ENCODE measurements at regions of chr5 and their contacts with region 1.

Region 1: GRCh38 chr5:139690064-139690802 is 42.1 kb downstream of the CXXC5 start:
- DNase-seq: no peak
- ATAC-seq: peak; percentile 77
- H3K4me3 ChIP-seq: no peak overlapping the region
- H3K27ac ChIP-seq: no peak overlapping the region
- H3K4me1 ChIP-seq: peaks cover 12% of the 10 kb centered on the region
- H3K27me3 ChIP-seq: no peaks in the 10 kb centered on the region
- CTCF ChIP-seq: peak; percentile 61 to 83 (median 75); a peak in 5 of 6 replicates
- EP300 ChIP-seq: no peak
- POLR2A ChIP-seq: no peak
- RAD21 ChIP-seq: peak; percentile 90

Region 2: DNA sequence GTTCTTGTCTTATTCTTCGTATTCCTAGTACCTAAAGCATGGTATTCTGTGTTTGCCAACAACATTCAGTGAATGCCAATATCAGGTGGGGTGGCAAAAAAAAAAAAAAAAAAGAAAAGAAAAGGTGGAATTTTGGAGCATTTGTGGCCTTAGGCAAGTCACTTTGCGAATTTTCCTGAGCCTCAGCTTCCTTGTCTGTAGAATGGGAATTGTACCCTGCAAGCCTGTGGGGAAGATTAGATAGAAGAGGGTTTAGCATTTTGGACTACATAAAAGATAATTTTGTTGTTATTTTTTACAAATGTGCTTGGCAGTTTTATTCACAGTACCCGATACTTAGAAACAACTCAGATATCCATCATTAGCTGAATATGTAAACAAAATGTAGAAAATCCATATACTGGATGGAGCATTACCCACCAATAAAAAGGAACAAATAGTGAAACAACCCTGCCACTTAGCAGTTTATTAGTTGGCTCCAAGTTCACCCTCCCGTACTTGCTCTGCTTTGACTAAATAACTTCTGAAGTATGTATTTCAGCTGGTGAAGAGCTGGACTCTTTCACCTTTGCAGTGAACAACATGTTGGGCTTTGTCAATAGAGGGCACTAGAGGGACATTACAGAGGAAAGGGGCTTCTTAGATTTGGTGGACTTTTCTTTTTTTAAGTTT is 115.5 kb before region 1 on chr5:
- CTCF ChIA-PET with region 1: interaction called, 18 read pairs
- POLR2A ChIA-PET with region 1: interaction called, 6 read pairs
- RAD21 ChIA-PET with region 1: interaction called, 14 read pairs
- SMC1A ChIA-PET with region 1: interaction called, 7 read pairs
- in situ Hi-C with region 1: no loop called
- intact Hi-C with region 1: no loop called
- DNase-seq: no peak
- ATAC-seq: peak; percentile 78
- H3K4me3 ChIP-seq: no peak overlapping the region
- H3K27ac ChIP-seq: no peak overlapping the region
- H3K4me1 ChIP-seq: peaks cover 40% of the 10 kb centered on the region
- H3K27me3 ChIP-seq: no peaks in the 10 kb centered on the region
- CTCF ChIP-seq: peak; percentile 65 to 78 (median 70)
- EP300 ChIP-seq: no peak
- POLR2A ChIP-seq: no peak
- RAD21 ChIP-seq: peak; percentile 75

Region 3: GRCh38 chr5:139660923-139661814 is 29.1 kb before region 1 on chr5:
- CTCF ChIA-PET with region 1: interaction called, 11 read pairs
- POLR2A ChIA-PET with region 1: interaction called, 6 read pairs
- RAD21 ChIA-PET with region 1: interaction called, 8 read pairs
- SMC1A ChIA-PET with region 1: interaction called, 3 read pairs
- in situ Hi-C with region 1: no loop called
- intact Hi-C with region 1: no loop called
- DNase-seq: no peak
- ATAC-seq: peak; percentile 46
- H3K4me3 ChIP-seq: peak overlapping the region; percentile 14; the same call in 1 of the 2 replicates
- H3K27ac ChIP-seq: peak overlapping the region; percentile 67
- H3K4me1 ChIP-seq: peaks cover 97% of the 10 kb centered on the region
- H3K27me3 ChIP-seq: no peaks in the 10 kb centered on the region
- CTCF ChIP-seq: no peak
- EP300 ChIP-seq: no peak
- POLR2A ChIP-seq: no peak
- RAD21 ChIP-seq: no peak

Region 4: DNA sequence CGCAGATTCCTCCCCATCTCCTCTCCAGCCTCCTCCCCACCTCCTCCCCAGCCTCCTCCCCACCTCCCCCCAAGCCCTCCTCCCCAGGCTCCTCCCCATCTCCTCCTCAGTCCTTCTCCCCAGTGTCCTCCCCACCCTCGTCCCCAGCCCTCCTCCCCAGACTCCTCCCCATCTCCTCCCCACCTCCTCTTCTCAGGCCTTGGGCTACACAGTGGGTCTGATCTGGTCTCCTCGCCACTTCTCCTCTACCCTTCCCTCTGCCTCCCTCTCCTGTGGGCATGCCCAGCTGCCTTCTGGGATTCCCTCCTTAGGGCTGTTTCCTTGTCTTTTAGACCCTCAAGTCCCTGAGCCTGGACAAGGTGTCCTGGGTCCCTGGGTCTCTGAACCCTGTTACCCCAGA is 13.8 kb before region 1 on chr5:
- CTCF ChIA-PET with region 1: interaction called, 54 read pairs
- POLR2A ChIA-PET with region 1: interaction called, 4 read pairs
- RAD21 ChIA-PET with region 1: interaction called, 20 read pairs
- SMC1A ChIA-PET with region 1: interaction called, 34 read pairs
- in situ Hi-C with region 1: no loop called
- intact Hi-C with region 1: no loop called
- DNase-seq: no peak
- ATAC-seq: no peak
- H3K4me3 ChIP-seq: no peak overlapping the region
- H3K27ac ChIP-seq: no peak overlapping the region
- H3K4me1 ChIP-seq: peaks cover 14% of the 10 kb centered on the region
- H3K27me3 ChIP-seq: no peaks in the 10 kb centered on the region
- CTCF ChIP-seq: no peak
- EP300 ChIP-seq: no peak
- POLR2A ChIP-seq: no peak
- RAD21 ChIP-seq: no peak

Region 5: GRCh38 chr5:139745800-139746690 is 55.8 kb after region 1 on chr5:
- CTCF ChIA-PET with region 1: interaction called, 4 read pairs
- POLR2A ChIA-PET with region 1: interaction called, 5 read pairs
- RAD21 ChIA-PET with region 1: interaction called, 23 read pairs
- SMC1A ChIA-PET with region 1: interaction called, 10 read pairs
- in situ Hi-C with region 1: no loop called
- intact Hi-C with region 1: no loop called
- DNase-seq: no peak
- ATAC-seq: peak; percentile 61
- H3K4me3 ChIP-seq: no peak overlapping the region
- H3K27ac ChIP-seq: peak overlapping the region; percentile 33; the same call in 1 of the 2 replicates
- H3K4me1 ChIP-seq: peaks cover 48% of the 10 kb centered on the region
- H3K27me3 ChIP-seq: peaks cover 0 to 14% of the 10 kb centered on the region in 2 experiments; a peak in 3 of 4 replicates
- CTCF ChIP-seq: no peak
- EP300 ChIP-seq: no peak
- POLR2A ChIP-seq: no peak
- RAD21 ChIP-seq: no peak

Region 6: DNA sequence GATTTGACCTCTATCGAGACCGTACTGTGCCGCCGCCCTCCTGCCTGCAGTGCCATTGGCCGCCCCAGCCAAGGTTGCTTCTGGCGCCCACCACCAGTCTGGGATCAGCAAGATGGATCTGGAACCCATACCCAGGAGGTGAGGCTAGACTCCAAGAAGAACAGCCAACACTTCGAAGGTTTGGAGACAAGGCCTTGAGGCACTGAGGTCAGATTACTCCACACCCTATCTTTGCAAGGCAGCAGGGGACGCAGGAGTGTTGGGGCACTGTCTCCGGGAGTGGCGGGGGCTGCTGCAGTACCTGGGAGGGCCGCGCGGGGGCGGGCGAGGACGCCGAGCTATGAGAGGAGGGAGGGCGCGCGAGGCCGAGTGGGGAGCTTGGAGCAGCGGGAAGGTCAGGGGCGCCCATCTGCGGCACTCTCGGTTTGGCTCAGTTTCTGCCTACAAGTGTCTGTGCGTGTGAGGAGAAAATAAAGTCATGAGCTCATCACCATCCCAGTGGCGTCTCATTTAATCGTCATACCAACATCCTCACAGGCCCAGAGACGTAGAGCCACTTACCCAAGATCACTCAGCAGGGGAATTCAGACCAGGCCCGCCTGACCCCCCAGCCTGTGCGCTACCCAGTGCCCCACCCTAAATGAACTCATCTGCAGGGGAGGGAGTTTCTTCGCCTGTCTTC is 84.9 kb after region 1 on chr5:
- CTCF ChIA-PET with region 1: interaction called, 14 read pairs
- POLR2A ChIA-PET with region 1: no interaction called
- RAD21 ChIA-PET with region 1: no interaction called
- SMC1A ChIA-PET with region 1: no interaction called
- in situ Hi-C with region 1: no loop called
- intact Hi-C with region 1: no loop called
- DNase-seq: no peak
- ATAC-seq: peak; percentile 98
- H3K4me3 ChIP-seq: no peak overlapping the region
- H3K27ac ChIP-seq: no peak overlapping the region
- H3K4me1 ChIP-seq: peaks cover 7% of the 10 kb centered on the region; the same call in 1 of the 2 replicates
- H3K27me3 ChIP-seq: peaks cover 0 to 3% of the 10 kb centered on the region in 2 experiments; a peak in 1 of 4 replicates
- CTCF ChIP-seq: peak; percentile 78 to 98 (median 90)
- EP300 ChIP-seq: no peak
- POLR2A ChIP-seq: no peak
- RAD21 ChIP-seq: peak; percentile 47

Region 7: GRCh38 chr5:139862313-139862712 is 172.1 kb after region 1 on chr5:
- CTCF ChIA-PET with region 1: no interaction called
- POLR2A ChIA-PET with region 1: no interaction called
- RAD21 ChIA-PET with region 1: no interaction called
- SMC1A ChIA-PET with region 1: no interaction called
- in situ Hi-C with region 1: no loop called
- intact Hi-C with region 1: no loop called
- DNase-seq: peak; percentile 23
- ATAC-seq: peak; percentile 71
- H3K4me3 ChIP-seq: no peak overlapping the region
- H3K27ac ChIP-seq: no peak overlapping the region
- H3K4me1 ChIP-seq: peaks cover 8% of the 10 kb centered on the region
- H3K27me3 ChIP-seq: no peaks in the 10 kb centered on the region
- CTCF ChIP-seq: no peak
- EP300 ChIP-seq: no peak
- POLR2A ChIP-seq: no peak
- RAD21 ChIP-seq: no peak